ENCODE measurements at regions of chr5 and their contacts with region 1.

Region 1: DNA sequence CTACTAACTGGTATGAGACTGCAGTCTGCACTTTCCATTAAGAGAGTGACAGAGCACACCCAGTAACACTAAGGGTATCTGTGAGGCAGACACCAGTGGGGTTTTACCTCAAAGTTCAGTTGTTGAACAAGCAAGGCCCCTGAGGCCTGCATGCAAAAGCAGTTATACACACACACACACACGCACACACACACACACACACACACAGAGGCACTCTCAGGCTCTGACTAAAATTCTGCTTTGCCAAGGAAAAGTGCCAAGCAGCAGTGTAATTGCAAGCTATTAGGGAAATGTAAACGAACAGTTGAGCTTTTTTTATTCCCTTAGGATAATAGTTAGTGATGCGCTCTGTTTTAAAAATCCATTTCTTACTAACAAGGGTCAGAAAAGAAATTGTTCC is 377.1 kb downstream of the SPOCK1 start:
- DNase-seq: no peak

Region 2: DNA sequence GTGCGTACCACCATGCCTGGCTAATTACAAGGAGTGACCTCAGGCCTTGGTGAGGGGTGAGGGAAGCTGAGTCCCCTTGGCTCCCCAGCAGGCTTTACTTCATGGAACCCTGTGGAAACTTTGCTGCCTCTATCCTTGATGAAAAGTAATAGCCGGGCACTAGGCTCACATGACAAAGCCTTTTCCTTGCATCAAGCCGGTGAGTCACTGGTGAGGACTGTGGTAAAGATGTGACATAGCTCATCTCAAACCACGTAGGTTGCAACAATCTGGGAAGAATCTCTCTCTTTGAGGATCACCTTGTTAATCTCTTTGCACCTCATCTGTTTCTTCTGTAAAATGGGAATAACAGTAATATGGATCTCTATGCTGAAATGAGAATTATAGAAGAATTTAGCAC is 1403.9 kb before region 1 on chr5:
- intact Hi-C with region 1: no loop called
- DNase-seq: no peak

Region 3: DNA sequence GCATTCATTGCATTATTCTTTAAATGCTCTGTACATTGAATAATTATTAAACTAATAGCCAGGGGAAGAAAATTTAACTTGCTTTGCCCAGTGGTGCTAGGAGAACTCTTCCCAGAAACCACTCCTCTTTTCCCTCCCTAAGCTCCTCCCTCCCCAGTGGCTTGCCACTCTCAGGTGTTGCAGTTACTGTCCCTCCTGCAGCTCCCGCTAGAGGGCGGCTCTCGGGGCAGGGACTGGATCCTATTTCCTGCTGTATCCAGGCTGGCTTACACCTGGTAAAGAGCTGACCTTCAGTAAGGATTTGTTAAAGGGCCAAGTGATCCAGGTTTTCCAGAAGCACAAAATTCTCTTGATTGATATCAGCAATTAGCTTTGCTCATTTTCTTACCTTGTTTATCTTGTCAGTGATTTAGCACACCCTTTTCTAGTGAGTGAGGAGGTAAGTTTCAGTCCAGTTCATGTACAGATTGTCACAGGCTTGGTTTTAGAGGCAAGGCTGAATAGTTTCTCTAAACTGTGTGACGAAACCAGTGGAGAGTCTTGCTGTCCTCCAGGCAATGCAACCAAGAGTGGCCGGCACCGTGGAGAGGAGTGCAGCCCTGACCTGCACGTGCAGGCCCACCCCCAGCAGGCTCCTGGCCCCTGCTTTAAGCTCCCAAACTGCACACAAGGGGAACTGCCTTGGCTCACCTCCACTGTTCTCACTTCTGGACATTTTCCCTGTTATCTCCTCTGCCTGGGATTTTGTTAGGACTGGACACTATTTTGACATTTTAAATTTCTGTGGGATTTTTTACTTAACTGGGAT is 46.7 kb before region 1 on chr5:
- intact Hi-C with region 1: loop called in 1 of 2 experiments (anchors 2 kb)
- DNase-seq: no peak

Region 4: DNA sequence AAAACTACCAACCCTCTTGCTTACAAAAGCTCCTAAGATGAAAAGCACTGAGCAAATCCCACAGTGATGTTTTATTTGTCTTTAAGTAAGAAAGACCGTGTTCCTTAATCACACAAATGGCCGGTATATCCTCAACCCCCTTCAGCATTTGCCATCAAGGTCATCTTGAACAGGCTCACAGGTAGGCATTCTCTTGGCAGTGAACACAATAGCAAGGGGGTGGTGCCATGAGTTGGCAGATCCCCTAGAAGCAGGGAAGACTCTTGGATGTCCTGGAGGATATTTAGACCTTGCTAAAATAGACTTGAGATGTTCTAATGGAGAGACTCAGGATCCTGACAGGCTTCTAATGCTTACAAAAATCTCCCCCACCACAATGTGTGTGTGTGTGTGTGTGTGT is 54.1 kb after region 1 on chr5:
- intact Hi-C with region 1: no loop called
- DNase-seq: no peak